Activated CD4-positive, alpha-beta T cell treated with anti-CD3 and anti-CD28 coated beads for 36 hours (primary cell): ENCODE measurements at regions of chr17 and their contacts with region 1.

Region 1: DNA sequence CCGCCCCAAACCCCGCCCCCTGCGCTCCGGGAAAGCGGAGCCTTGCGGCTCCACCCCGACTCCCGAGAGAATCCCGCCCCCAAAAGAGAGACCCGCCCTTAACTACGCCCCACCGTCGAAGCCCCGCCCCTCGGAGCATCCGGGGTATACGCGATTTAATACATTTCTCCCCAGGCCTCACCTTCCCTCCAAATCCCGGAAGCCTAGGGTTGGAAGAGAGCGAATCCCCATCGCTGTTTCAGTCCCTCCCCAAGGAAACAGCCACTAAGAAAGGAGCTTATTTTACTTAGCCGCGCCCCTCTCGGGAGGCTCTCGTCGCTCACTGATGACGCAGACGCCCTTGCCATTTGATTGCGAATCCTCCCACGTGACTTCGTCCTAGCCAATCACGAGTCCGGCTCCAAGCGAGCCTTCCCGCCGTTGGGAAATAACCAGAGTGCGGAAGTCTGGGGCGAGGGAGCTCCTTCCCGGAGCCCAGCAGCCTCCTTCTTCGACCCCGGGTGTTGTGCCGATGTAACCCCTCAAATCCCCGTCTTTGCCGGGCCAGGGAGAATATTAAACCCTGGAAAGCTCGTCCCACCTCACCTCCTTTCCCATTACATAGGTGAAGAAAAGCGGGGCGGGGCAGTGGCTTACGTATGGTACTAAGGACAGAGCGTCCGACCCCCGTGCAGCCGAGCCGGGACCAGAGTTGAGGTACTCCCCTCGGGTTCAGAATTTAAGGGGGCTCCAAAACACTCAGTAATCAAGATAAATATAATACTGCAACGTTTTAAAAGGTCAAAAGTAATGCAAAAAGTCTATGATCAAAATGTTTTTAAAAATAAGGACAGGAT is 462 bp upstream of the FDXR start:
- DNase-seq: peak; percentile 100
- ATAC-seq: peak; percentile 97
- H3K4me3 Mint-ChIP-seq: peak overlapping the region; percentile 88
- H3K27ac Mint-ChIP-seq: peak overlapping the region; percentile 98
- H3K4me1 Mint-ChIP-seq: peaks cover 22% of the 10 kb centered on the region
- H3K27me3 Mint-ChIP-seq: no peaks in the 10 kb centered on the region

Region 2: GRCh38 chr17:73311781-73312641 is 1561.2 kb before region 1 on chr17 and contains the start of gene CDC42EP4:
- CTCF ChIA-PET with region 1: no interaction called
- POLR2A ChIA-PET with region 1: no interaction called
- intact Hi-C with region 1: loop called in 1 of 2 experiments (anchors 5 kb)
- DNase-seq: peak; percentile 93
- ATAC-seq: peak; percentile 95
- H3K4me3 Mint-ChIP-seq: peak within 1 kb of the TSS; percentile 80
- H3K27ac Mint-ChIP-seq: no peak within 1 kb of the TSS
- H3K4me1 Mint-ChIP-seq: peaks cover 10% of the 10 kb centered on the region
- H3K27me3 Mint-ChIP-seq: peaks cover 2% of the 10 kb centered on the region
- total RNA-seq, gene CDC42EP4: 0.87 to 0.91 TPM

Region 3: DNA sequence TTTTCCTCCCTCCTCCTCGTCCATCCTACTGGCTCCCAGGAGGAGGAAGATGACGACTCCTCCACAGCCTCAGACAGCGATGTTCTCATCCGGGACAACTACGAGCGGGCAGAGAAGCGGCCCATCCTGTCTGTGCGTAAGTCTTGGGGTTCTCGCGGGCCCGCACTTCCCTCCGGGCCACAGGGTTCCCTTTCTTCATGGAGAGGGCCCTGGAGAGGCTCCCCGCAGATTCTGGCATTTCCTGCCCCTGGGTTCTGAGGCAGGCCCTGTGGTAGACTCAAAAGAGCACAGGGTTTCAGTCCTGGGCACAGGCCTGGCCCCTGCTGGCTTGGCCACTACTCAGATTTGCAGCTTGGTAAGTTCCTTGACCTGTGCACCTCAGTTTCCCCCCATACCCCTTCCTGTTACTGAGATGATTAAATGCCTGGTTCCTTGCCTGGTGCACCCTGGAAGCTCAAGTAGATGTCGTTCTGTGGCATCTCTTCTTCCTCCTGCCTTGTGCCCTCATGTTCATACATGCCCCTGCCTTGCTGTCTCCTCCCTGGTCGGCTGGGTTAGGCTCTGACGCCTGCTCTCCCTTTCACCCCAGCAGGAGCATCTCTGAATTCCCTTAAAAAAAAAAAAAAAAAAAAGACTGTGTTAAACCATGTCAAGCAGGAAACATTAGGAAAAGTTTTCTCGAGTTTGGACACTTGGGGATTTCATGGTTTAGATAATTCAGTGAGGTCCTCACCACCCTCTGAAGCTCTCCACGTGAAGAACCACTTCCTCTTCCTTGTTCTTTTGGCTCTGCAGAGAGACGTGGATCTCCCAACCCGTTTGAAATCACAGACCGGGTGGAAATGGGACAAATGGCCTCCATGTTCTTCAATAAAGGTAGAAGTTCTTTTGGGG is 82.8 kb before region 1 on chr17:
- CTCF ChIA-PET with region 1: interaction called, 15 read pairs
- POLR2A ChIA-PET with region 1: interaction called, 3 read pairs
- intact Hi-C with region 1: no loop called
- DNase-seq: no peak
- ATAC-seq: no peak
- H3K4me3 Mint-ChIP-seq: no peak overlapping the region
- H3K27ac Mint-ChIP-seq: no peak overlapping the region
- H3K4me1 Mint-ChIP-seq: peaks cover 32% of the 10 kb centered on the region
- H3K27me3 Mint-ChIP-seq: no peaks in the 10 kb centered on the region

Region 4: GRCh38 chr17:75034236-75034908 is 161.1 kb after region 1 on chr17:
- CTCF ChIA-PET with region 1: no interaction called
- POLR2A ChIA-PET with region 1: no interaction called
- intact Hi-C with region 1: loop called in 1 of 2 experiments (anchors 2 kb)
- DNase-seq: peak; percentile 96
- ATAC-seq: peak; percentile 65
- H3K4me3 Mint-ChIP-seq: peak overlapping the region; percentile 91
- H3K27ac Mint-ChIP-seq: peak overlapping the region; percentile 96
- H3K4me1 Mint-ChIP-seq: peaks cover 49% of the 10 kb centered on the region
- H3K27me3 Mint-ChIP-seq: no peaks in the 10 kb centered on the region

Region 5: GRCh38 chr17:75271233-75271954 is 398.1 kb after region 1 on chr17:
- CTCF ChIA-PET with region 1: no interaction called
- POLR2A ChIA-PET with region 1: no interaction called
- intact Hi-C with region 1: loop called in 1 of 2 experiments (anchors 1 kb)
- DNase-seq: peak; percentile 93
- ATAC-seq: peak; percentile 79
- H3K4me3 Mint-ChIP-seq: peak overlapping the region; percentile 80
- H3K27ac Mint-ChIP-seq: peak overlapping the region; percentile 81
- H3K4me1 Mint-ChIP-seq: peaks cover 21% of the 10 kb centered on the region
- H3K27me3 Mint-ChIP-seq: no peaks in the 10 kb centered on the region

Region 6: GRCh38 chr17:75515496-75516254 is 642.4 kb after region 1 on chr17 and contains the start of gene CASKIN2:
- CTCF ChIA-PET with region 1: no interaction called
- POLR2A ChIA-PET with region 1: no interaction called
- intact Hi-C with region 1: loop called in 1 of 2 experiments (anchors 1 kb)
- DNase-seq: peak; percentile 93
- ATAC-seq: peak; percentile 61
- H3K4me3 Mint-ChIP-seq: peak within 1 kb of the TSS; percentile 68
- H3K27ac Mint-ChIP-seq: no peak within 1 kb of the TSS
- H3K4me1 Mint-ChIP-seq: peaks cover 22% of the 10 kb centered on the region
- H3K27me3 Mint-ChIP-seq: peaks cover 3% of the 10 kb centered on the region
- total RNA-seq, gene CASKIN2: 2.9 to 3.0 TPM